ENCODE measurements at regions of chr1 and their contacts with region 1.

Region 1: DNA sequence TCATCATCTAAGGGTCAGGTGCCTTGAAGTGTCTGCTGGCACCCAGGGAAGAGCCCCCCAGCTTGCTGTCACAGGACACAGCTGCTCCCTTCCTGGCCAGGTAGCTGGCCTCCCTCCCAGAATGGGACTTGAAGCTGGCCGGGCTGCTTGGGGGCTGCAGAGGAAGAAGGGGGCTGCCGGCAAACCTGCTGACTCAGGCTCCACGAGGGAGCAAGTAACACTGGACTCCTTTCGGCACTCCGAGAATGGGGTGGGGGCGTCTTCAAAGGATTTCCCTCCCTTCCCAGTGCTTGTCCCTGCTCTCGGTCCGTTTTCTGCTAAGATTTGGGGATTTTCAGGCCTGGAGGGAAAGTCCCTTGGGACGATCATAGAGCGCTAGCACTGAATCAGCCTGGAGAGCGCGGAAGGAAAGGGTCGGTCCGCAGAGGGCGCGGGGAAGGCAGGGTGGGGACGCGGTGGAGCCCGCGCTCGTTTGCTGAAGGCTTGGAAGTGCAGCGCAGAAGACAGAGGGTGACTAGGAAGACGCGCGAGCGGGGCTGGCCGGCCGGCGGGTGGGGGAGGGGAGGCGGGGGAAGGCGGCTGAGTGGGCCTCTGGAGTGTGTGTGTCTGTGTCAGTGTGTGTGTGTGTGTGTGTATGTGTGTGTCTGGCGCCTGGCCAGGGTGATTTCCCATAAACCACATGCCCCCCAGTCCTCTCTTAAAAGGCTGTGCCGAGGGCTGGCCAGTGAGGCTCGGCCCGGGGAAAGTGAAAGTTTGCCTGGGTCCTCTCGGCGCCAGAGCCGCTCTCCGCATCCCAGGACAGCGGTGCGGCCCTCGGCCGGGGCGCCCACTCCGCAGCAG is at the start of gene CSF1:
- DNase-seq: peak; percentile 83 to 88
- ATAC-seq: peak; percentile 69 to 88 (median 80)
- H3K4me3 ChIP-seq: peak within 1 kb of the TSS; percentile 69 to 97 (median 89)
- H3K27ac ChIP-seq: peak within 1 kb of the TSS; percentile 77 to 93 (median 88)
- H3K4me1 ChIP-seq: peaks cover 26 to 84% (median 62%) of the 10 kb centered on the region in 9 donors
- H3K27me3 ChIP-seq: peaks cover 0 to 17% (median 0%) of the 10 kb centered on the region in 7 donors
- CTCF ChIP-seq: peak in 2 of 9 donors; percentile 13 to 26
- total RNA-seq, gene CSF1: 6.3 to 26.2 (median 12.3) TPM

Region 2: DNA sequence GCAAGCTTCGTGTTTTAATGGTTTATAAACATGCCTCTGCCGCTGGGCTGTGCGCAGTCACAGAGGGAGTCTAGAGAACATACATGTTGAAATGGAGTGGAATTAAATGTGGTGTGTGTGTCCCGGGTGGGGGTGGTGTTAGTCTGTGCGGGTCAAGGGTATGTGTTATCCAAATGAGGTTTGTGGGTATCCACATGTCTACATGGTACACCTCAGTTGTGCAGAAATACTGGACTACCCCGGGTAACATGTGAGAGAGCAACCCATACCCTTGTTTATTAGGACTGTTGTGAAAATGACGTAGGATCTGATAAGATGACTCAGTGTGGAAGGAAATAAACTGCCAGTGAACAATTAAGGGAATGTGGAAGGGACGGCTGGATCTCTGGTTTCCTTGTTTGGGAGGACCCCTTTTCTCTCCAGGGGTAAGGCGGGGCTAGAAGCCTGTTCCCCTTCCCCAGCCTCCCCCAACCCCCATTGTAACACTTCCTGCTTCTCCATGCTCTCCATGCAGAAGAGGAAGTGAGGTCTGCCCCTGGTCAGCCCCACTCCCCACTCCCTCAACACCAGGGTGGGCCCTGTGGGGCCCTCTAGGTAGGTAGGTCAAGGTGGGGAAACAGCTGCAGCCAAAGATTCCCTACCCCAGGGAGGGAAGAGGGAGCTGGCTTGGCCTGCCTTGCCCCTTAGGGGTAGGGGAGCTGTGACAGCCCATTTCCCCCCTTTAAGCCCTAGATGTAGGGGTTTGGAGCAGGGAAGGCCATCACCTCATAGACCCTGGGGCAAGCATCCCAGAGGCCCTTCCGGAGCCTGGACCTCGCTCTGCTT is 147.3 kb before region 1 on chr1:
- intact Hi-C with region 1: no loop called
- DNase-seq: peak in 1 of 2 donors; percentile 5
- ATAC-seq: peak in 2 of 8 donors; percentile 2 to 10
- H3K4me3 ChIP-seq: no peak overlapping the region
- H3K27ac ChIP-seq: peak overlapping the region in 2 of 10 donors; percentile 39 to 73
- H3K4me1 ChIP-seq: peaks cover 0 to 33% (median 12%) of the 10 kb centered on the region in 9 donors
- H3K27me3 ChIP-seq: no peaks in the 10 kb centered on the region
- CTCF ChIP-seq: no peak

Region 3: GRCh38 chr1:109790735-109791494 is 119.4 kb before region 1 on chr1:
- intact Hi-C with region 1: loop called in 8 of 10 experiments (anchors 2 to 10 kb)
- DNase-seq: peak; percentile 55 to 63
- ATAC-seq: peak; percentile 54 to 72 (median 66)
- H3K4me3 ChIP-seq: no peak overlapping the region
- H3K27ac ChIP-seq: peak overlapping the region in 9 of 10 donors; percentile 5 to 80 (median 47)
- H3K4me1 ChIP-seq: peaks cover 33 to 78% (median 62%) of the 10 kb centered on the region in 9 donors
- H3K27me3 ChIP-seq: no peaks in the 10 kb centered on the region
- CTCF ChIP-seq: peak in 8 of 9 donors; percentile 37 to 73 (median 60)

Region 4: DNA sequence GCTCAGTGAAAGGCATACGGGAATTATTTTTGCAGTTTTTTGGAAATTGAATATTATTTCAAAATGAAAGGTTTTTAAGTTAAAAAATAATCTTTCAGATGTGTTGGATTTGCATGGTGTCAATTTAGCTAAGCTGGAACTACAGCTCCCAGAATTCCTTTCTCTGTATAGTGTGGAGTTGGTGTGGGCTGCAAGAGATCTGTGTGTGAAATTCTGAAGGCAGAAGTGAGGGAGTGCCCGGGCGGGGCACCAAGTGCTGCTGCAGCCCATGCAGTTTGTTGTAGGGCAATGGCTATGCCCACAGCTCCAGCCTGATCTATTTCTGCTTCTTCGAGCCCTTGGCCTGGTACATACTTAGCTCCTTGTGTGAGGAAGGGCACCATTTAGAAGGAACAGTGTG is 60.1 kb before region 1 on chr1:
- intact Hi-C with region 1: no loop called
- DNase-seq: no peak
- ATAC-seq: no peak
- H3K4me3 ChIP-seq: no peak overlapping the region
- H3K27ac ChIP-seq: no peak overlapping the region
- H3K4me1 ChIP-seq: peaks cover 0 to 19% (median 11%) of the 10 kb centered on the region in 9 donors
- H3K27me3 ChIP-seq: no peaks in the 10 kb centered on the region
- CTCF ChIP-seq: no peak

Region 5: GRCh38 chr1:109877320-109877771 is 33.0 kb before region 1 on chr1:
- intact Hi-C with region 1: loop called in 1 of 10 experiments (anchors 2 kb)
- DNase-seq: peak; percentile 66 to 68
- ATAC-seq: peak; percentile 85 to 94 (median 89)
- H3K4me3 ChIP-seq: peak overlapping the region in 5 of 10 donors; percentile 9 to 24 (median 15)
- H3K27ac ChIP-seq: peak overlapping the region; percentile 19 to 92 (median 84)
- H3K4me1 ChIP-seq: peaks cover 0 to 59% (median 24%) of the 10 kb centered on the region in 9 donors
- H3K27me3 ChIP-seq: no peaks in the 10 kb centered on the region
- CTCF ChIP-seq: peak in 7 of 9 donors; percentile 9 to 51 (median 24)

Region 6: GRCh38 chr1:109931189-109931731 is 20.9 kb after region 1 on chr1:
- intact Hi-C with region 1: loop called in 1 of 10 experiments (anchors 2 kb)
- DNase-seq: peak; percentile 88 to 91
- ATAC-seq: peak; percentile 74 to 89 (median 82)
- H3K4me3 ChIP-seq: no peak overlapping the region
- H3K27ac ChIP-seq: peak overlapping the region; percentile 14 to 84 (median 79)
- H3K4me1 ChIP-seq: peaks cover 32 to 80% (median 68%) of the 10 kb centered on the region in 9 donors
- H3K27me3 ChIP-seq: no peaks in the 10 kb centered on the region
- CTCF ChIP-seq: no peak

Region 7: GRCh38 chr1:109979489-109980091 is 69.2 kb after region 1 on chr1:
- intact Hi-C with region 1: loop called in 5 of 10 experiments (anchors 1 to 5 kb)
- DNase-seq: no peak
- ATAC-seq: no peak
- H3K4me3 ChIP-seq: no peak overlapping the region
- H3K27ac ChIP-seq: peak overlapping the region in 2 of 10 donors; percentile 16 to 58
- H3K4me1 ChIP-seq: peaks cover 3 to 59% (median 35%) of the 10 kb centered on the region in 9 donors
- H3K27me3 ChIP-seq: no peaks in the 10 kb centered on the region
- CTCF ChIP-seq: no peak